Heart right ventricle (tissue), 16 donors: ENCODE measurements at regions of chr2 and their contacts with region 1.

Region 1: DNA sequence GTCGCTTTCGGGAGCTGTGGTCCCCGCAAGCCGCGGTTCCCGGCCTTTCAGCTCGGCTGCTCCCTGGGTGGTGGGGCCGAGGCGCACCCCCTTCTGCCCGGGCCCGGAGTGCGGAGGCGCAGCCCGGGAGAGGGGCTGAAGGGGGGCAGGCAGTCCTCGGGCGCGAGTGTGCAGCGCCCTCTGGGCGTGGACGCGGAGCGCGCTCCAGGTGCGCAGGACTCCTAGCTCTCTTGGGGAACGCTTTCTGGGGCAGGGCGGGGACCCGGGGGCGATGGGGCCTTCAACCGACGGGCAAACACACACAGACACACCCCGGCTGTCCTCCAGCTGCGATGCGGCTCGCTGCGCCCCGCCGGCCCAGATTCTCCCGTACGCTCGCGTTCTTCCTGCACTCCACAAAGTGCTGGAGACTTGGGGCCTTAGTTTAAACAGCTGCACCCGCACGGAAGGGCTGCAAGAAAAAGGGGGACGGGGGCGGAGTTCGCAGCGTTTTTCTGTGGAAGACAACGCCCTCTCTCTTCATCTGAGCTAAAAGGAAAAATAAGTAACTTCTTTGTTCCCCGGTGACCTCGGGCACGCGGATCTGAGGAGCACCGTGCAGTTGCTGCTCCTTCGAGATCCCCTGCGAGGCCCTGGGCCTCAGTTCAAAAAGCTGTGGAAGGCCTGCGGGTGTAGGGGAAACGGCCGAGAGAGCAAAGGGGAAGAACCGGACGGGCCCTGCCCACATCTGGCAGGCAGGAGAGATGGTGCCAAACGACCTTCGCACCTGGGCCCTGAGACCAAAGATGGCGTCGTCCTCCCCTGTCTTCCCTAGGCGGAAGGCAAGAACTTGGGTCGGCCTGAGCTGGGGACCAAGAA is 593 bp upstream of the SDC1 start:
- DNase-seq: peak in 1 of 2 donors; percentile 39
- ATAC-seq: peak; percentile 68 to 89 (median 84)
- H3K4me3 ChIP-seq: peak overlapping the region; percentile 25 to 61 (median 56)
- H3K27ac ChIP-seq: no peak overlapping the region
- H3K4me1 ChIP-seq: peaks cover 0 to 22% (median 19%) of the 10 kb centered on the region in 9 donors
- H3K27me3 ChIP-seq: peaks cover 0 to 70% (median 46%) of the 10 kb centered on the region in 7 donors
- CTCF ChIP-seq: peak in 8 of 9 donors; percentile 30 to 67 (median 43)

Region 2: GRCh38 chr2:20106746-20107145 is 118.8 kb before region 1 on chr2:
- intact Hi-C with region 1: loop called in 5 of 10 experiments (anchors 2 to 10 kb)
- DNase-seq: peak; percentile 59 to 63
- ATAC-seq: peak; percentile 44 to 87 (median 69)
- H3K4me3 ChIP-seq: peak overlapping the region in 8 of 10 donors; percentile 8 to 43 (median 27)
- H3K27ac ChIP-seq: peak overlapping the region in 1 of 10 donors; percentile 22
- H3K4me1 ChIP-seq: peaks cover 0 to 27% (median 4%) of the 10 kb centered on the region in 9 donors
- H3K27me3 ChIP-seq: peaks cover 0 to 18% (median 8%) of the 10 kb centered on the region in 7 donors
- CTCF ChIP-seq: peak; percentile 23 to 70 (median 57)

Region 3: GRCh38 chr2:20129331-20130096 is 96.0 kb before region 1 on chr2:
- intact Hi-C with region 1: loop called in 3 of 10 experiments (anchors 10 kb)
- DNase-seq: no peak
- ATAC-seq: no peak
- H3K4me3 ChIP-seq: no peak overlapping the region
- H3K27ac ChIP-seq: no peak overlapping the region
- H3K4me1 ChIP-seq: peaks cover 0 to 21% (median 8%) of the 10 kb centered on the region in 9 donors
- H3K27me3 ChIP-seq: peaks cover 0 to 8% (median 4%) of the 10 kb centered on the region in 7 donors
- CTCF ChIP-seq: no peak

Region 4: GRCh38 chr2:20135631-20136050 is 89.9 kb before region 1 on chr2:
- intact Hi-C with region 1: loop called in 2 of 10 experiments (anchors 10 kb)
- DNase-seq: peak; percentile 38 to 56
- ATAC-seq: peak in 5 of 8 donors; percentile 45 to 59 (median 54)
- H3K4me3 ChIP-seq: no peak overlapping the region
- H3K27ac ChIP-seq: no peak overlapping the region
- H3K4me1 ChIP-seq: no peaks in the 10 kb centered on the region
- H3K27me3 ChIP-seq: peaks cover 0 to 14% (median 4%) of the 10 kb centered on the region in 7 donors
- CTCF ChIP-seq: peak; percentile 23 to 72 (median 58)